ENCODE measurements at regions of chr7 and their contacts with region 1.

Region 1: GRCh38 chr7:6637544-6638229 is 569 bp downstream of the ZNF316 start:
- DNase-seq: peak; percentile 24 to 43 (median 29)
- H3K4me3 ChIP-seq: peak overlapping the region; percentile 55 to 75 (median 60)
- H3K4me3 Mint-ChIP-seq: peak overlapping the region; percentile 84 to 94
- H3K27ac ChIP-seq: peak overlapping the region in 1 of 2 donors; percentile 33
- H3K27ac Mint-ChIP-seq: peak overlapping the region; percentile 20 to 89 (median 74)
- H3K4me1 ChIP-seq: peaks cover 48 to 66% of the 10 kb centered on the region in 2 donors
- H3K4me1 Mint-ChIP-seq: peaks cover 51% of the 10 kb centered on the region
- H3K27me3 ChIP-seq: no peaks in the 10 kb centered on the region
- H3K27me3 Mint-ChIP-seq: peaks cover 0 to 8% (median 3%) of the 10 kb centered on the region in 3 donors
- CTCF ChIP-seq: peak; percentile 25

Region 2: DNA sequence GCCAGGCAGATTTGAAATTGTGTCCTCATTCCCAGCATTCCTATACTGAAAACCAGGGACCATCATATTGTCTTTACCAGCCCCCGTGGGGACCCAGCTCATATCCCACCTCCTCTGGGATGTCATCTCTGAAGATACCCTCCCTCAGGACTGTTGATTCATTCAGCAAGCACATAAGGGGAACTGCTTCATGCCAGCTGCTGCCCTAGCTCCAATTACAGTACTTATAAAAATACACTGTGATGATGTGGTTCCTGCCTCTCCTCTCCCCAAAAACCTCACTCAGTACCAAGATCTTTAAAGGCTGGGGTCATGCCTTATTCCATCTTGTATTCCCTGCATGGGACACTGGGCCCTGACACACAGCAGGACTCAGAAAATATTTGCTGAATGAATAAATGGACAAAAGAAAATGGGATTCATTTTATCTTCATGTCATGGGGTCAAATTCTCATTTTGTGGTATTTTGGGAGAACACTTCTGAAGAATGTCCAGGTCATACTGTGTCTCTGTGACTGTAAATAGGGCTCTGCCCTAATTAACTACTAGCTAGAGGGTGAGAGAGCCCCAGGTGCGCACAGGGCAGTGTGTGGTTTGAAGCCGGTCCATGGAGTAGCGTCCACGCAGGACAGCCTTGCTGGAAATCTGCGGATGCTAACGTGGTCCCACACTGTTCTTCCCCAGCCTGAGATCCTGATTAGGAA is 160.9 kb before region 1 on chr7:
- intact Hi-C with region 1: no loop called
- DNase-seq: no peak
- H3K4me3 ChIP-seq: no peak overlapping the region
- H3K4me3 Mint-ChIP-seq: no peak overlapping the region
- H3K27ac ChIP-seq: peak overlapping the region in 1 of 2 donors; percentile 37
- H3K27ac Mint-ChIP-seq: peak overlapping the region in 6 of 7 donors; percentile 4 to 85 (median 76)
- H3K4me1 ChIP-seq: peaks cover 0 to 4% of the 10 kb centered on the region in 2 donors
- H3K4me1 Mint-ChIP-seq: peaks cover 44% of the 10 kb centered on the region
- H3K27me3 ChIP-seq: no peaks in the 10 kb centered on the region
- H3K27me3 Mint-ChIP-seq: peaks cover 0 to 1% (median 0%) of the 10 kb centered on the region in 3 donors
- CTCF ChIP-seq: no peak

Region 3: GRCh38 chr7:6706677-6707544 is 69.2 kb after region 1 on chr7 and contains the start of gene ZNF12:
- intact Hi-C with region 1: loop called (anchors 5 kb)
- DNase-seq: peak; percentile 92 to 94 (median 94)
- H3K4me3 ChIP-seq: peak within 1 kb of the TSS; percentile 67 to 87 (median 78)
- H3K4me3 Mint-ChIP-seq: peak within 1 kb of the TSS; percentile 93 to 96
- H3K27ac ChIP-seq: peak within 1 kb of the TSS; percentile 34 to 88
- H3K27ac Mint-ChIP-seq: peak within 1 kb of the TSS; percentile 64 to 89 (median 82)
- H3K4me1 ChIP-seq: peaks cover 17 to 23% of the 10 kb centered on the region in 2 donors
- H3K4me1 Mint-ChIP-seq: peaks cover 31% of the 10 kb centered on the region
- H3K27me3 ChIP-seq: peaks cover 0 to 2% of the 10 kb centered on the region in 2 donors
- H3K27me3 Mint-ChIP-seq: peaks cover 7 to 12% (median 9%) of the 10 kb centered on the region in 3 donors
- CTCF ChIP-seq: no peak
- polyA plus RNA-seq, gene ZNF12: 4.9 to 8.1 (median 5.7) TPM